Transverse colon (tissue), 4 donors: ENCODE measurements at regions of chr13 and their contacts with region 1.

Region 1: GRCh38 chr13:75384879-75385707 is 96.9 kb downstream of the TBC1D4 start:
- DNase-seq: no peak
- H3K4me3 ChIP-seq: no peak overlapping the region
- H3K27ac ChIP-seq: no peak overlapping the region
- H3K4me1 ChIP-seq: no peaks in the 10 kb centered on the region
- H3K27me3 ChIP-seq: no peaks in the 10 kb centered on the region
- CTCF ChIP-seq: no peak
- EP300 ChIP-seq: no peak
- POLR2A ChIP-seq: no peak

Region 2: DNA sequence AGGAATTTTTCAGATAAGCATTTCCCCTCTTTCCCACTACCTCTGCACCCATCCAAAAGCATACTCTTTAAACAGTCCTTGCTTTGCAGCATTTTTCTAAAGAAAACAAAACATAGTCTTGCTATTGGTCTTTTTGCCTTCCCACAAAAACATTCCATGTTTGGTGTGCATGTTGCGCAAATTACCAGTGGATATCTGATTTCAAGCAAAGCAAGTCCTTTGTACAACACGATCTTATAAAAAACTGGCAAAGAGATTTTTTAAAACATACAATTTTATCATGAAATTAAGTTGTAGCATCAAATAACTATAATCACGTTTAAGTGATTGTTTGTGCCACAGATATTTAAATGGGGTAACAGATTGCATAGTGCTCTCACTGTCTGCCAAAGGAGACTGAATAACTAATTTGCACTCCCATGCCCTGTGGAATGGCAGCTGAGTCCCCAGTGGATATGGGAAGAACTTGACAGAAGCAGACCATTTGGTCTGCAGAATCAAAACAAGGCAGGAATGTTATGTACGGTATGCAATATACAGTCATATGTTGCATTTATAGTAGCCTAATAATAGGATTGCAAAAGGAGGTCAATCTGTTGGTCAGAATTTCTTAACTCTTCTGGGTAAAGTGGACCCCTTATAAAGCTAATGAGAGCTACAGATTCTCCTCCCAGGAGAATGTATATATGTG is 188.8 kb before region 1 on chr13:
- in situ Hi-C with region 1: no loop called
- intact Hi-C with region 1: no loop called
- DNase-seq: no peak
- H3K4me3 ChIP-seq: no peak overlapping the region
- H3K27ac ChIP-seq: no peak overlapping the region
- H3K4me1 ChIP-seq: no peaks in the 10 kb centered on the region
- H3K27me3 ChIP-seq: no peaks in the 10 kb centered on the region
- CTCF ChIP-seq: no peak
- EP300 ChIP-seq: no peak
- POLR2A ChIP-seq: no peak

Region 3: GRCh38 chr13:75250526-75251178 is 134.4 kb before region 1 on chr13:
- in situ Hi-C with region 1: no loop called
- intact Hi-C with region 1: no loop called
- DNase-seq: no peak
- H3K4me3 ChIP-seq: no peak overlapping the region
- H3K27ac ChIP-seq: no peak overlapping the region
- H3K4me1 ChIP-seq: no peaks in the 10 kb centered on the region
- H3K27me3 ChIP-seq: peaks cover 4% of the 10 kb centered on the region
- CTCF ChIP-seq: no peak
- EP300 ChIP-seq: no peak
- POLR2A ChIP-seq: no peak

Region 4: GRCh38 chr13:75468098-75468497 is 83.0 kb after region 1 on chr13:
- in situ Hi-C with region 1: no loop called
- intact Hi-C with region 1: loop called (anchors 10 kb)
- DNase-seq: no peak
- H3K4me3 ChIP-seq: no peak overlapping the region
- H3K27ac ChIP-seq: no peak overlapping the region
- H3K4me1 ChIP-seq: no peaks in the 10 kb centered on the region
- H3K27me3 ChIP-seq: no peaks in the 10 kb centered on the region
- CTCF ChIP-seq: no peak
- EP300 ChIP-seq: no peak
- POLR2A ChIP-seq: no peak